CD4-positive, alpha-beta memory T cell (primary cell): ENCODE measurements at regions of chr14 and their contacts with region 1.

Region 1: DNA sequence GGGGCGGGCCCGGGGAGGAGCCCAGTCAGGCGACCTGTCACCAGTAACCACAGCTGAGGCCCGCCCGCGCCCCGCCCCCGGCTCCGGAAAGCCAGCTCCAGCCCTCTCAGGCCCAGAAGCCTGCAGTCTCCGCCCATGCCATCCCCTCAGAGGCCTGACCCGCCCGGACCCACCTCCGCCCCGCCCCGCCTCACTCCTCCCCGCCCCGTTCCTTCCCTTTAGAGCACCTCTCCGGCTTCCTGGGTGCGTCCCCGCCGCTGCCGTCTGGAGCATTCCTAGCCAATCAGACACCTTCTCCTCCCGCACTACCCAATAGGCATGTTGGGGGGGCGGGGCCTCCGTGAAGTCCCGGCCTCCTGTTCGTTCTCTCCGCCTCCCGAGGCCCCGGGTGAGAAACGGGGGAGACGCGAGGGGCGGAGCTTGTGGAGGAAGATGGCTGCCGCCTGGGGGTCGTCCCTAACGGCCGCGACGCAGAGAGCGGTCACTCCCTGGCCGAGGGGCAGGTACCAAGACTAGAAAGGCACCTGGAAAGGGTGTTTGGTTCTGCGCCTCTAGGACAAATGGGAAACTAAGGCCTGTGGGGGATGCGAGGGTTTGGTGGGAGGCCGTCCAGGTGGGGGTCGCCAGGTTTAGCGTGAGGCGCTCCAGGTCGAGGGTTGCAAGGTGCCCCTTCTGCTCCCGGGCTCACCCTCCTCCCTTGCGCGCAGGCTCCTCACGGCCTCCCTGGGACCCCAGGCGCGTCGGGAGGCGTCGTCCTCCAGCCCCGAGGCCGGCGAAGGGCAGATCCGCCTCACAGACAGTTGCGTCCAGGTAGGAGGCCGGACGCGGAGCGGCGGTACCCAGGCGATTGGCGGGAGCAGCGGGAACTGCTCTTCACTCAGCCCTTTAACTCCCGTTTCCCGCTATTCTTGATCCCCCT is at the start of gene ISCA2:
- DNase-seq: peak; percentile 97 to 100 (median 99)
- H3K4me3 ChIP-seq: peak within 1 kb of the TSS; percentile 79 to 89
- H3K4me3 Mint-ChIP-seq: no peak within 1 kb of the TSS
- H3K27ac ChIP-seq: peak within 1 kb of the TSS; percentile 86
- H3K27ac Mint-ChIP-seq: peak within 1 kb of the TSS in 6 of 7 donors; percentile 91 to 97 (median 94)
- H3K4me1 ChIP-seq: peaks cover 39% of the 10 kb centered on the region
- H3K4me1 Mint-ChIP-seq: peaks cover 24 to 31% (median 27%) of the 10 kb centered on the region in 4 donors
- H3K27me3 ChIP-seq: no peaks in the 10 kb centered on the region
- H3K27me3 Mint-ChIP-seq: no peaks in the 10 kb centered on the region
- total RNA-seq, gene ISCA2: 31.3 to 33.1 TPM

Region 2: DNA sequence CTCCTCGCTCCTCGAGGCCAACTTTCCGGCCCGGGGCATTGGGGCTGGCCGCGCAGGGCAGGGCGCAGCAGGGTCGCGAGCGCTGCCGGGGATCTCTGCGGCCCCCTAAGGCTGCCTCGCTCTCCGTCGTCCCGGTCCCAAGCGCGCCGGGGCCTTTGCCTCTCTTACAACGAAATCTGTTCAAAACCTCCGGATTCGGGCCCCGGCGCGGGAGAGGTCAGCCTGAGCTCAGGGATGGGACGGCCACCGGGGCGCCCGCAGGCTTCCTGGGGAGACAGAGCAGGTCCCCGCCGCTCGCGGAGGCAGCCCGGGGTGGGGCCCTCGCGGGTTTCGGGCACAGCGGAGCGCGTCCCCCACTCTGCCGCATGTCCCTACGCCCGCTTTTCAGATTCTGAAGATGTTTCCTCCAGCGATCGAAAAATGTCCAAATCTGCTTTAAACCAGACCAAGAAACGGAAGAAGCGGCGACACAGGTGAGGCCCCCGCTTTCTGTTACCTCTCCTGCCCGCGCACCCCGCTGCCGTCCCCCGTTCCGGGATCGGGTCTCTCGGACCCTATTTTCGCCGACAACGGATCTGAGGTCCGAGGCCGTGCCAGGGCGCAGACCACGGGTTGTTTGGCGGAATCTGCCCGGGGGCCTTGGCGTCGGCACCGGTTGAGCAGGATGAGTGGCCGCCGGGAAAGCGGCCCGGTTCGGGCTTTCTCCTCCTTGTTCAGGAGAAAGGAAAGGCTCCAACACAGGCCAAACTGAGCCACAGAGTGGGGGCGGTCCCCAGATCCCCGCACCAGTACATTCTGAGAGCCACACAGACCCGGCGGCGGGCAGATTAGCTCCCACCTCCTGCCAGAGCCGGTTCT is 252.6 kb before region 1 on chr14:
- CTCF ChIA-PET with region 1: no interaction called
- POLR2A ChIA-PET with region 1: no interaction called
- intact Hi-C with region 1: no loop called
- DNase-seq: peak in 1 of 5 donors; percentile 16
- H3K4me3 ChIP-seq: peak overlapping the region in 1 of 2 donors; percentile 24
- H3K4me3 Mint-ChIP-seq: peak overlapping the region; percentile 53 to 87 (median 76)
- H3K27ac ChIP-seq: no peak overlapping the region
- H3K27ac Mint-ChIP-seq: no peak overlapping the region
- H3K4me1 ChIP-seq: peaks cover 20% of the 10 kb centered on the region
- H3K4me1 Mint-ChIP-seq: peaks cover 10 to 35% (median 19%) of the 10 kb centered on the region in 4 donors
- H3K27me3 ChIP-seq: peaks cover 59% of the 10 kb centered on the region
- H3K27me3 Mint-ChIP-seq: peaks cover 59 to 70% of the 10 kb centered on the region in 2 donors

Region 3: DNA sequence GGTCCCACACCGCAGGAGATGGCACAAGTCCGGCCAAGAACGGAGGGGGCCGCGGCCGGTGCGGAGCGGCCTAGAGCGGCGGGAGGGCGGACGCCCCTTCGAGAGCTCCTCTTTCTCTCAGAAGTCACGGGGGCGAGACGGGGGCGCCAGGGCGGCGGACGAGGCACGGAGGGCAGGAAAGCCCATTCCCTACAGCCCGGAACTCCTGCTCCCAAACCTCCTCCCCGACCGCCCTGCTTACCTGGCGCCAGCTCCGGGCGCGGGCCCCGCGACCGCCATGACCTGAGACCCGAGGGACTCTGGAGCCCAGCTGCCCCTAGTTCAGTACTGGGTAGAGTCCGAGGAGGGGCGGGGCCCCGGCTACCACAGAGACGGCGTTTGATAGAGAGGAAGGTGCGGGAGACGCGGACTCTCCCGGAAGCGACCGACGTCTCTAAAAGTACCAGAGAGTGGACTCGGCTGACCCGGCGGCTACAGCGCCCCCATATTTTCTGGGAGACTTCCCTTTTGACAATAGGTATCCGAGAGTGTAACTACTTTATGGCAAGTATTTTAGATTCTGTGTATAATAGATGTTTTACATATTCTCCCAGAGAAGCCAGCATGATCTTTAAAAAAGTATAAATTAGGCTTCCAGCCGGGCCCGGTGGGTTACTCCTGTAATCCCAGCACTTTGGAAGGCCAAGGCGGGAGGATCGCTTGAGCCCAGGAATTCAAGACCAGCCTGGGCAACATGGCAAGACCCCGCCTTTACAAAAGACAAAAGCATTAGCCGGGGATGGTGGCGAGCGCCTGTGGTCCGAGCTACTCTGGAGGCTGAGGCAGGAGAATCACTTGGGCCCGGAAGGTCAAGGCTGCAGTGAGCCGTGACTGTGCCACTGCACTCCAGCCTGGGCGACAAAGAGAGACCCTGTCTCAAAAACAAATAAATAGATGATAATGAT is 190.7 kb before region 1 on chr14 and contains the start of gene ABCD4:
- CTCF ChIA-PET with region 1: no interaction called
- POLR2A ChIA-PET with region 1: no interaction called
- intact Hi-C with region 1: loop called (anchors 2 kb)
- DNase-seq: peak; percentile 73 to 85 (median 76)
- H3K4me3 ChIP-seq: peak within 1 kb of the TSS; percentile 58 to 94
- H3K4me3 Mint-ChIP-seq: peak within 1 kb of the TSS; percentile 87 to 99 (median 98)
- H3K27ac ChIP-seq: peak within 1 kb of the TSS; percentile 65
- H3K27ac Mint-ChIP-seq: peak within 1 kb of the TSS; percentile 82 to 98 (median 94)
- H3K4me1 ChIP-seq: peaks cover 29% of the 10 kb centered on the region
- H3K4me1 Mint-ChIP-seq: peaks cover 26 to 51% (median 32%) of the 10 kb centered on the region in 4 donors
- H3K27me3 ChIP-seq: no peaks in the 10 kb centered on the region
- H3K27me3 Mint-ChIP-seq: no peaks in the 10 kb centered on the region
- total RNA-seq, gene ABCD4: 98.3 to 102 TPM

Region 4: DNA sequence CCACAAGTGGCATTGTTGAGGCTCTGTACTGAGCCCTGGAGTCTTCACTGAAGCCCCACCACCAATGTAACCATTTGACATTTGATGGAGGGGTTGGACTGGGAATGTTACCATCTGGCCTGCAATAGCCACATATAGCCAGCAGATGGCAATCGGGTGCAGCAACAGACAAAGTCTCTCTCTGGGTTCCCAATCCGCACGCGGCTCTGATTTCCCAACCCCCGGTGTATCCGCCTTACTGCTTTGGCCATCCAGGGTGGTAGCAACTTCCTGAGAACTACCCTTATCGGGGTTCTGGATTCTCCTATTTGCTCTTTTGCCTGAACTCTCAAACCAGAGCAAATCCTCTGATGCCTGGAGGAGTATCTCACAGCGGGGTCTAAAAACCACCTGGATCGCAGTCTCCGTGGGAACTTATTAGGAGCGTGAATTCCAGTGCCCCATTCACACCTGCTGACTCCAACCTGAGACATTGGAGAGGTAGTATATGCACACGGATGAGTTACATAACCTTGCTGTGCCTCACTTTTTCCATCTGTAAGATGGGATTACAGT is 131.2 kb before region 1 on chr14:
- CTCF ChIA-PET with region 1: interaction called, 5 read pairs
- POLR2A ChIA-PET with region 1: no interaction called
- intact Hi-C with region 1: loop called (anchors 1 kb)
- DNase-seq: peak; percentile 54 to 59 (median 57)
- H3K4me3 ChIP-seq: no peak overlapping the region
- H3K4me3 Mint-ChIP-seq: no peak overlapping the region
- H3K27ac ChIP-seq: no peak overlapping the region
- H3K27ac Mint-ChIP-seq: peak overlapping the region in 1 of 7 donors; percentile 3
- H3K4me1 ChIP-seq: no peaks in the 10 kb centered on the region
- H3K4me1 Mint-ChIP-seq: no peaks in the 10 kb centered on the region
- H3K27me3 ChIP-seq: peaks cover 5% of the 10 kb centered on the region
- H3K27me3 Mint-ChIP-seq: peaks cover 3 to 8% of the 10 kb centered on the region in 2 donors

Region 5: GRCh38 chr14:74469548-74470518 is 23.8 kb before region 1 on chr14:
- CTCF ChIA-PET with region 1: no interaction called
- POLR2A ChIA-PET with region 1: no interaction called
- intact Hi-C with region 1: no loop called
- DNase-seq: no peak
- H3K4me3 ChIP-seq: no peak overlapping the region
- H3K4me3 Mint-ChIP-seq: no peak overlapping the region
- H3K27ac ChIP-seq: no peak overlapping the region
- H3K27ac Mint-ChIP-seq: no peak overlapping the region
- H3K4me1 ChIP-seq: no peaks in the 10 kb centered on the region
- H3K4me1 Mint-ChIP-seq: no peaks in the 10 kb centered on the region
- H3K27me3 ChIP-seq: no peaks in the 10 kb centered on the region
- H3K27me3 Mint-ChIP-seq: no peaks in the 10 kb centered on the region

Region 6: DNA sequence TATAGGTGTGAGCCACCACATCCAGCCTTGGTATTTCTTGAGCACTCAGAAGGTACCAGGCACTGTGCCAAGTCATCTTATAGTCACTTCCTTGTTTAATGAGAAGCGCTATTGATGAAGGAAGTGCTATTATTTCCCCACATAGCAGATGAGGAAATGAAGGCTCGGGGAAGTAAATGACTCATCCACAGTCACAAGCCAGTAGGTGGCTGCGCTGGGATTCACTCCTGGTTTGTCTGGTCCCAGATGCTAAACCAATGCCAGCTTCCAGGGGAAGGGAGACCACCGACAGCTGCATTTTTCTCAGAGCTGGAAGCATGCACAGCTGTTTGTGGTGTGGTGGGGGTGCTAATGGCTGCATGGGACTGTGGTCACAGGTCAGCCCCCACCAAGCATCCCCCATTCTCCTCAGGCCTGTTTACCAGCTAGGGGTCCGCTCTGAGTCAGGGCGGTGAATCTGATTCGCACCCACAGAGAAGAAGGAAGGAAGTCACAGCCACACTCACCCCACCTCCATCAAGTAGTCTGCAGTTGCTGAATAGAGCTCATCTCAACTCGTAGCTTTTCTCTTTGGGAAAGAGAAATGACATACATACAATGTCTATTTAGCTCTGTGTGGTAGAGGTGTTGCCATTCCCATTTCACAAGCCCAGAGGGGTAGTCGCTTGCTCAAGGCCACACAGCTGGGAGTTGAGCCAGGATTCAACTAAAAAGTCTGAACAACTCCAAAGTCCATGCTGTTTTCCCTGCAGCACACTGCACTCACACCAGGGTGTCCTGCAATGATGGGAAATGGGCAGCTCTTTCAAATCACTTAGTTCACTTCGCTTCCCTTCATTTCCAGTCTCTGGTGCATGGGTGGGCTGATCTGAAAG is 124.7 kb after region 1 on chr14:
- CTCF ChIA-PET with region 1: interaction called, 3 read pairs
- POLR2A ChIA-PET with region 1: interaction called, 9 read pairs
- intact Hi-C with region 1: loop called (anchors 2 kb)
- DNase-seq: peak; percentile 69 to 87 (median 70)
- H3K4me3 ChIP-seq: peak overlapping the region; percentile 31 to 51
- H3K4me3 Mint-ChIP-seq: peak overlapping the region; percentile 70 to 89 (median 82)
- H3K27ac ChIP-seq: peak overlapping the region; percentile 51
- H3K27ac Mint-ChIP-seq: peak overlapping the region; percentile 88 to 98 (median 93)
- H3K4me1 ChIP-seq: peaks cover 57% of the 10 kb centered on the region
- H3K4me1 Mint-ChIP-seq: peaks cover 41 to 79% (median 60%) of the 10 kb centered on the region in 4 donors
- H3K27me3 ChIP-seq: no peaks in the 10 kb centered on the region
- H3K27me3 Mint-ChIP-seq: peaks cover 4 to 5% of the 10 kb centered on the region in 2 donors

Region 7: GRCh38 chr14:74641601-74642391 is 148.2 kb after region 1 on chr14:
- CTCF ChIA-PET with region 1: no interaction called
- POLR2A ChIA-PET with region 1: no interaction called
- intact Hi-C with region 1: no loop called
- DNase-seq: no peak
- H3K4me3 ChIP-seq: no peak overlapping the region
- H3K4me3 Mint-ChIP-seq: no peak overlapping the region
- H3K27ac ChIP-seq: no peak overlapping the region
- H3K27ac Mint-ChIP-seq: no peak overlapping the region
- H3K4me1 ChIP-seq: no peaks in the 10 kb centered on the region
- H3K4me1 Mint-ChIP-seq: no peaks in the 10 kb centered on the region
- H3K27me3 ChIP-seq: no peaks in the 10 kb centered on the region
- H3K27me3 Mint-ChIP-seq: peaks cover 4 to 7% of the 10 kb centered on the region in 2 donors

Region 8: GRCh38 chr14:74945823-74946682 is 452.5 kb after region 1 on chr14:
- CTCF ChIA-PET with region 1: no interaction called
- POLR2A ChIA-PET with region 1: no interaction called
- intact Hi-C with region 1: loop called (anchors 10 kb)
- DNase-seq: peak; percentile 62 to 74 (median 63)
- H3K4me3 ChIP-seq: no peak overlapping the region
- H3K4me3 Mint-ChIP-seq: peak overlapping the region in 5 of 8 donors; percentile 22 to 81 (median 63)
- H3K27ac ChIP-seq: no peak overlapping the region
- H3K27ac Mint-ChIP-seq: peak overlapping the region; percentile 21 to 93 (median 70)
- H3K4me1 ChIP-seq: peaks cover 37% of the 10 kb centered on the region
- H3K4me1 Mint-ChIP-seq: peaks cover 13 to 32% (median 30%) of the 10 kb centered on the region in 4 donors
- H3K27me3 ChIP-seq: no peaks in the 10 kb centered on the region
- H3K27me3 Mint-ChIP-seq: peaks cover 0 to 2% of the 10 kb centered on the region in 2 donors

Region 9: GRCh38 chr14:75063407-75064213 is 570.0 kb after region 1 on chr14 and contains the start of gene ACYP1:
- CTCF ChIA-PET with region 1: no interaction called
- POLR2A ChIA-PET with region 1: no interaction called
- intact Hi-C with region 1: loop called (anchors 5 kb)
- DNase-seq: peak; percentile 85 to 89 (median 87)
- H3K4me3 ChIP-seq: peak within 1 kb of the TSS; percentile 85 to 97
- H3K4me3 Mint-ChIP-seq: peak within 1 kb of the TSS; percentile 96 to 100 (median 99)
- H3K27ac ChIP-seq: peak within 1 kb of the TSS; percentile 76
- H3K27ac Mint-ChIP-seq: peak within 1 kb of the TSS; percentile 92 to 98 (median 97)
- H3K4me1 ChIP-seq: peaks cover 19% of the 10 kb centered on the region
- H3K4me1 Mint-ChIP-seq: peaks cover 16 to 42% (median 24%) of the 10 kb centered on the region in 4 donors
- H3K27me3 ChIP-seq: no peaks in the 10 kb centered on the region
- H3K27me3 Mint-ChIP-seq: no peaks in the 10 kb centered on the region
- total RNA-seq, gene ACYP1: 38.5 to 46.6 TPM

Region 10: GRCh38 chr14:76151398-76152339 is 1658.1 kb after region 1 on chr14 and contains the start of gene GPATCH2L:
- CTCF ChIA-PET with region 1: no interaction called
- POLR2A ChIA-PET with region 1: no interaction called
- intact Hi-C with region 1: loop called (anchors 5 kb)
- DNase-seq: peak; percentile 94 to 97 (median 96)
- H3K4me3 ChIP-seq: peak within 1 kb of the TSS; percentile 85 to 88
- H3K4me3 Mint-ChIP-seq: peak within 1 kb of the TSS; percentile 92 to 99 (median 96)
- H3K27ac ChIP-seq: peak within 1 kb of the TSS; percentile 94
- H3K27ac Mint-ChIP-seq: peak within 1 kb of the TSS; percentile 93 to 99 (median 97)
- H3K4me1 ChIP-seq: peaks cover 51% of the 10 kb centered on the region
- H3K4me1 Mint-ChIP-seq: peaks cover 37 to 59% (median 49%) of the 10 kb centered on the region in 4 donors
- H3K27me3 ChIP-seq: no peaks in the 10 kb centered on the region
- H3K27me3 Mint-ChIP-seq: no peaks in the 10 kb centered on the region
- total RNA-seq, gene GPATCH2L: 66.0 to 70.1 TPM